ENCODE measurements at regions of chr6 and their contacts with region 1.

Region 1: GRCh38 chr6:15327271-15327670 is 81.4 kb downstream of the JARID2 start:
- DNase-seq: peak; percentile 57 to 78 (median 70)
- ATAC-seq: peak; percentile 88
- H3K4me3 ChIP-seq: no peak overlapping the region
- H3K27ac ChIP-seq: no peak overlapping the region
- H3K4me1 ChIP-seq: peaks cover 12 to 33% of the 10 kb centered on the region in 2 experiments
- H3K27me3 ChIP-seq: no peaks in the 10 kb centered on the region
- CTCF ChIP-seq: peak; percentile 44 to 65 (median 56); a peak in 5 of 6 replicates
- EP300 ChIP-seq: peak; percentile 21; the same call in 1 of the 2 replicates
- POLR2A ChIP-seq: no peak
- RAD21 ChIP-seq: peak; percentile 58 to 74

Region 2: GRCh38 chr6:15287670-15288375 is 39.4 kb before region 1 on chr6:
- CTCF ChIA-PET with region 1: no interaction called
- POLR2A ChIA-PET with region 1: no interaction called
- in situ Hi-C with region 1: no loop called
- intact Hi-C with region 1: no loop called
- DNase-seq: no peak
- ATAC-seq: peak; percentile 14
- H3K4me3 ChIP-seq: no peak overlapping the region
- H3K27ac ChIP-seq: no peak overlapping the region
- H3K4me1 ChIP-seq: peaks cover 15 to 25% of the 10 kb centered on the region in 2 experiments; a peak in 4 of 5 replicates
- H3K27me3 ChIP-seq: no peaks in the 10 kb centered on the region
- CTCF ChIP-seq: no peak
- EP300 ChIP-seq: no peak
- POLR2A ChIP-seq: no peak
- RAD21 ChIP-seq: no peak

Region 3: DNA sequence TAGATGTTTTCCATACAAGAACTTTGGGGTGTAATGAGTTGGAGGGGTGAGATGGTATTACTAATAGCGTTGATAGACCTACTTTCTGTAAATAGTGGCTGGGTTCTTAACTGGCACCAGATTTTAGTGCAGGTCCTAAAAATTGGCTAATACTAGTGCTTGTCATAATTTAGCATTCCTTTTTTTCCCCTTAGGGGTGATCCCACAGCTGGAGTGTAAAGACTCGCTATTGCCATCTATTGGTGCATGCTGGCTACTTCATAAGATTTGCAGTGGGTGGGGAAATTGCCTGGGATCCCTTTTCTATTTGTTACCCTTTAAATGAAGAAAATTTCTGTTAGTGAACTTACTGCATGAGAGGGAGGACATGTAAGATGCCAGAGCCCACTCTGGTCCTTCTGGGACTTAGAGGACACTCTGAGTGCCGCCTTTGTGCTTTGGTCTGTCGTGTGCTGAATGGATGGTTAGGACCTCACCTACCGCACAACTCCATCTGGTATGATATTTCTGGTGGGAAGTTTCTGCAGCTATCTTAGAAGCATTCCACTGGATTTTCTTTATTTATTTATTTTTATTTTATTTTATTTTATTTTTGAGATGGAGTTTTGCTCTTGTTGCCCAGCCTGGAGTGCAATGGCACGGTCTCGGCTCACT is 114.1 kb after region 1 on chr6:
- CTCF ChIA-PET with region 1: no interaction called
- POLR2A ChIA-PET with region 1: interaction called, 3 read pairs
- in situ Hi-C with region 1: no loop called
- intact Hi-C with region 1: loop called (anchors 10 kb)
- DNase-seq: peak; percentile 50 to 82 (median 66)
- ATAC-seq: peak; percentile 85
- H3K4me3 ChIP-seq: no peak overlapping the region
- H3K27ac ChIP-seq: no peak overlapping the region
- H3K4me1 ChIP-seq: peaks cover 5 to 24% of the 10 kb centered on the region in 2 experiments
- H3K27me3 ChIP-seq: no peaks in the 10 kb centered on the region
- CTCF ChIP-seq: peak; percentile 79 to 88 (median 87)
- EP300 ChIP-seq: no peak
- POLR2A ChIP-seq: no peak
- RAD21 ChIP-seq: peak; percentile 83 to 88